GM12878 (cell line): ENCODE measurements at regions of chr5 and their contacts with region 1.

Region 1: GRCh38 chr5:10577371-10578292 is 13.8 kb downstream of the ANKRD33B start:
- DNase-seq: no peak
- ATAC-seq: peak; percentile 68
- H3K4me3 ChIP-seq: peak overlapping the region; percentile 46; the same call in 1 of the 2 replicates
- H3K27ac ChIP-seq: peak overlapping the region; percentile 77
- H3K4me1 ChIP-seq: peaks cover 64% of the 10 kb centered on the region
- H3K27me3 ChIP-seq: no peaks in the 10 kb centered on the region
- CTCF ChIP-seq: no peak
- EP300 ChIP-seq: no peak
- POLR2A ChIP-seq: no peak; the same call in 1 of the 2 replicates
- RAD21 ChIP-seq: no peak

Region 2: GRCh38 chr5:10518347-10518746 is 59.3 kb before region 1 on chr5:
- CTCF ChIA-PET with region 1: no interaction called
- POLR2A ChIA-PET with region 1: no interaction called
- RAD21 ChIA-PET with region 1: no interaction called
- SMC1A ChIA-PET with region 1: no interaction called
- in situ Hi-C with region 1: no loop called
- intact Hi-C with region 1: no loop called
- DNase-seq: no peak
- ATAC-seq: no peak
- H3K4me3 ChIP-seq: no peak overlapping the region
- H3K27ac ChIP-seq: no peak overlapping the region
- H3K4me1 ChIP-seq: peaks cover 3% of the 10 kb centered on the region; the same call in 1 of the 2 replicates
- H3K27me3 ChIP-seq: no peaks in the 10 kb centered on the region
- CTCF ChIP-seq: no peak
- EP300 ChIP-seq: no peak
- POLR2A ChIP-seq: no peak
- RAD21 ChIP-seq: no peak

Region 3: DNA sequence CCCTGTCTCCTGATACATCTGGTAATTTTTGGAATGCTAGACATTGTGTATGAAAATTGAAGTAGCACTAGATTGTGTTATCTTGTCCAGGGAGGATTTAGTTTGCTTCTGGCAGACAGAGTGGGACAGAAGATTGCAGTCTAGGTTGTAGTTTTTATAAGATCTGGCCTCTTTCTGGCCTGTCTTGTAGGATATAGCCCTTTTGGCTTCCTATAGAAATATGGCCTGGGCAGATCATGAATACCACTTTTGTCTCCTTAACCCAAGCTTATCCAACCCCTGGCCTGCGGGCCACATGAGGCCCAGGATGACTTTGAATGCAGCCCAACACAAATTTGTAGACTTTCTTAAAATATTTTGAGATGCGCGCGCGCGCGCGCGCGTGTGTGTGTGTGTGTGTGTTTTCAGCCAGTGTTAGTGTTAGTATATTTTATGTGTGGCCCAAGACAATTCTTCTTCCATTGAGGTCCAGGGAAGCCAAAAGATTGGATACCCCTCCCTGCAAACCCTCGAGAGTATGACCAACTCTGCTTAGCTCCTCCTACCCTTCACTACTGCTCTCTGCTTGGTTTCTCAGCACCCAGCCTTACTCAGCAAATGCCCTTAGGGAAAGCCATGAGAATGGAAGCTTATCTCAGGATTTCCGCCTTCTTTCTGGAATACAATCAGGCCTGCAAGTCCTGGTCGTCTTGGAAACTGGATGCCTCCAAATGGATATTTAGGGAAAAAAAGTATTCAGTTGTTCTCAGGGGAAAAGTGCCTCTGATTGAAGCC is 12.8 kb after region 1 on chr5:
- CTCF ChIA-PET with region 1: interaction called, 9 read pairs
- POLR2A ChIA-PET with region 1: interaction called, 12 read pairs
- RAD21 ChIA-PET with region 1: interaction called, 7 read pairs
- SMC1A ChIA-PET with region 1: interaction called, 10 read pairs
- in situ Hi-C with region 1: no loop called
- intact Hi-C with region 1: no loop called
- DNase-seq: no peak
- ATAC-seq: peak; percentile 27; the same call in 2 of the 3 replicates
- H3K4me3 ChIP-seq: no peak overlapping the region
- H3K27ac ChIP-seq: peak overlapping the region; percentile 28
- H3K4me1 ChIP-seq: peaks cover 79% of the 10 kb centered on the region
- H3K27me3 ChIP-seq: no peaks in the 10 kb centered on the region
- CTCF ChIP-seq: no peak
- EP300 ChIP-seq: no peak
- POLR2A ChIP-seq: no peak
- RAD21 ChIP-seq: no peak

Region 4: GRCh38 chr5:10621832-10622231 is 44.2 kb after region 1 on chr5:
- CTCF ChIA-PET with region 1: interaction called, 83 read pairs
- POLR2A ChIA-PET with region 1: no interaction called
- RAD21 ChIA-PET with region 1: interaction called, 45 read pairs
- SMC1A ChIA-PET with region 1: interaction called, 51 read pairs
- in situ Hi-C with region 1: no loop called
- intact Hi-C with region 1: no loop called
- DNase-seq: no peak
- ATAC-seq: peak; percentile 17; the same call in 2 of the 3 replicates
- H3K4me3 ChIP-seq: no peak overlapping the region
- H3K27ac ChIP-seq: peak overlapping the region; percentile 47
- H3K4me1 ChIP-seq: peaks cover 27% of the 10 kb centered on the region
- H3K27me3 ChIP-seq: no peaks in the 10 kb centered on the region
- CTCF ChIP-seq: no peak
- EP300 ChIP-seq: no peak
- POLR2A ChIP-seq: no peak
- RAD21 ChIP-seq: no peak

Region 5: DNA sequence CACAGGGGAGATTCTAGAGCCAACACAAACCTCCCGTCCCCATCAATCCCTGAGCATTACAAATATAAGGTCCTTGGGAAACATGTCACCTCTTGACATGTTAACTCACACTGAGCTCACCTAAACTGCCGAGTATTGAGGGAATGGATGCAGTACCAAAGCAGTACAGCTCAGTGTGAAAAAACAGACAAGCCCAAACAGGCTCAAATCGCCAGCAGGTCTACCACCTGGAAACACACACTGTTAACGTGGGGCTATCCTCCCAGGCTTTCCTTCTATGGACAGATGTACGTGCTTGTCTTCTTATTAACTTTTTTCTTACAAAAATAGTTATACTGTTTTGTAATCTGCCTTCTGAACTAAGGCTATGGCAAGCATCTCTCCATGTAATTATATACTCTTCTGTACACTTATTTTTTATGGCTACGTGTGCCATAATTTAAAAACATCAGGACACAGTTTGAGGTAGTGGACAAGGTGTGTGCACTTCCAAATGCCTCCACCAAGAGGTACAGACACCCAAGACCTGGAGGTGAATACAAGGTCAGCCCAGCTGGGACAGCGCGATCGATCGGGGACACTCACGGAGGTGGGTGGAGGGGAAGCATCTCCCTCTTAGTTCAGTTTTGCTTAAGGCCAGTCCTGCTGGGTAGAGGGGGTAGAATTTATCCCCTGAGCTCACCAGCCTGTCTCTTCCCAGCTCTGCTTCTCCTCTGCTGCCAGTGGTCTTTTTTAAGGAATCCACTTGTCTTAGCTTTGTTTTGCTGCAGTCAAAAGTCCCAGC is 106.9 kb after region 1 on chr5:
- CTCF ChIA-PET with region 1: interaction called, 14 read pairs
- POLR2A ChIA-PET with region 1: no interaction called
- RAD21 ChIA-PET with region 1: interaction called, 8 read pairs
- SMC1A ChIA-PET with region 1: interaction called, 7 read pairs
- in situ Hi-C with region 1: no loop called
- intact Hi-C with region 1: no loop called
- DNase-seq: no peak
- ATAC-seq: peak; percentile 76
- H3K4me3 ChIP-seq: 0 out of 2 replicates have a peak overlapping the region, but pooled peaks have one; percentile 17
- H3K27ac ChIP-seq: peak overlapping the region; percentile 88
- H3K4me1 ChIP-seq: peaks cover 23% of the 10 kb centered on the region
- H3K27me3 ChIP-seq: no peaks in the 10 kb centered on the region
- CTCF ChIP-seq: no peak
- EP300 ChIP-seq: no peak
- POLR2A ChIP-seq: no peak
- RAD21 ChIP-seq: no peak

Region 6: GRCh38 chr5:10921160-10921559 is 343.5 kb after region 1 on chr5:
- CTCF ChIA-PET with region 1: no interaction called
- POLR2A ChIA-PET with region 1: no interaction called
- RAD21 ChIA-PET with region 1: no interaction called
- SMC1A ChIA-PET with region 1: no interaction called
- in situ Hi-C with region 1: no loop called
- intact Hi-C with region 1: no loop called
- DNase-seq: no peak
- ATAC-seq: no peak
- H3K4me3 ChIP-seq: no peak overlapping the region
- H3K27ac ChIP-seq: no peak overlapping the region
- H3K4me1 ChIP-seq: no peaks in the 10 kb centered on the region
- H3K27me3 ChIP-seq: no peaks in the 10 kb centered on the region
- CTCF ChIP-seq: no peak
- EP300 ChIP-seq: no peak
- POLR2A ChIP-seq: no peak
- RAD21 ChIP-seq: no peak